Activated B cell treated with CpG ODN at 0.5 μM for 24 hours (primary cell): ENCODE measurements at regions of chr16 and their contacts with region 1.

Region 1: DNA sequence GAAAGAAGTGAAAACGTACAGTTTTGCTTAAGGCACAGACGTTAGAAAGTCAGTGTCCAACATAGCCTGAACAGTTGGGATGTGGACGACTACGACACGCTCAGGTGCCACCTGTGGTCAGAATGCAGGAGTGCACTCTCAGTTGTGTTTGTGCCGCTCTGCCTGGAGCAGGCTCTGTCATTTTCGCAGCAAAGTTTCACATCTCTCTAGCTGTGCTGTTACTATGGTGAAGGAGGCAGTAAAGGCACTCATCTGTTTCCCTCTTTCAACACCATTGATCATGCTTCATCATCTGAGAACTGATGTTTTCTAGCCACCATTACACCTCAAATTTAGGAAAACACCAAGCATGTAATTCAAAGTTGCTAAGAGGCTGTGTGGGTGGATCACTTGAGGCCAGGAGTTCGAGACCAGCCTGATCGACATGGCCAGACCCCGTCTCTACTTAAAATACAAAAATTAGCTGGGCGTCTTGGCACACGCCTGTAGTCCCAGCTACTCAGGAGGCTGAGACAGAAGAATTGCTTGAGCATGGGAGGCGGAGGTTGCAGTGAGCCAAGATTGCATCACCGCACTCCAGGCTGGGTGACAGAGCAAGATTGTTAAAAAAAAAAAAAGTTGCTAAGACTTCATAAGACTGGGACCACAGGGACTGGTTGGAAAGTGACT is 44.9 kb upstream of the DNAJA2 start:
- DNase-seq: peak; percentile 39
- ATAC-seq: peak; percentile 98
- H3K4me3 Mint-ChIP-seq: peak overlapping the region; percentile 13
- H3K27ac Mint-ChIP-seq: peak overlapping the region; percentile 73
- H3K4me1 Mint-ChIP-seq: peaks cover 28% of the 10 kb centered on the region
- H3K27me3 Mint-ChIP-seq: no peaks in the 10 kb centered on the region
- CTCF ChIP-seq: no peak

Region 2: DNA sequence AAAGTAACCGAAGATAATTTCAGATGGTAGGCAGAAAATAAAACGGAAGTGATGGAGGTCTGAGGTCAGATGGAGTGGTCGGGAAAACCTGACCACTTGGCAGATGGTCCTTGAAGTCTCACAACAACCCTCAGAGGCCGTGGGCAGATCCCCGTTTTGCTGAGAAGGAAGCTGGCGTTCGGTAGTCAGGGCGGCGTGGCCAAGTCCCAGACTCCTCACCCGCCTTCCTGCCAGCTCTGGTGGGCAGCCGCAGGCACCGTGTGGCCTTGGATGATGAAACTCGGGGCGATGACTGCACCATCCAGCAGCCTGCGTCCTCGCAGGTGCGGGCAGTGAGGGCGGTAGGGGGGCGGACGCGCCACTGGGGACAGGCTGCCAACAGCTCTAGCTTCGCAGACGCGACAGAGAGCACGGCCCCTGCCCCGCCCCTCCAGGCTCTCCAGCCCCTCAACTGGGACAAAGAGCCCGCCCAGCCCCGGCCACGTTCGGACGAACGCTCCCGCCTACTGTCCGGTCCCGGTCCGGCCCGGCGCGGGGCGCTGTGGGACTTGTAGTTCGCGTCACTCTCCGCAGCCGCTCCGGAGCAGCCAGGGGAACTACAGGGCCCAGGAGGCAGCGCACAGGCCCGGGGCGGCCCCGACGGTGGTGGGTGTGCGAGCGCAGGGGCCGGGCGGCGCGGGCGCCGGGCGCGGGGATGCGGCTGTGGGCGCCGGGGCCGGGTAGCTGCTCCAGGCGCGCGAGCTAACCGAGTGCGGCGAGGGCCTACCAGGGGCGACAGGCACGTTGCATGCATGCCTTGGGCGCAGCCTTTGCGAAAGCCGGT is 134.5 kb before region 1 on chr16 and contains the start of gene GPT2:
- CTCF ChIA-PET with region 1: no interaction called
- POLR2A ChIA-PET with region 1: no interaction called
- intact Hi-C with region 1: loop called (anchors 1 kb)
- DNase-seq: peak; percentile 85
- ATAC-seq: peak; percentile 95
- H3K4me3 Mint-ChIP-seq: peak within 1 kb of the TSS; percentile 89
- H3K27ac Mint-ChIP-seq: peak within 1 kb of the TSS; percentile 85
- H3K4me1 Mint-ChIP-seq: peaks cover 11% of the 10 kb centered on the region
- H3K27me3 Mint-ChIP-seq: peaks cover 2% of the 10 kb centered on the region
- CTCF ChIP-seq: no peak
- total RNA-seq, gene GPT2: 11.7 and 17.4 TPM in 2 replicates

Region 3: DNA sequence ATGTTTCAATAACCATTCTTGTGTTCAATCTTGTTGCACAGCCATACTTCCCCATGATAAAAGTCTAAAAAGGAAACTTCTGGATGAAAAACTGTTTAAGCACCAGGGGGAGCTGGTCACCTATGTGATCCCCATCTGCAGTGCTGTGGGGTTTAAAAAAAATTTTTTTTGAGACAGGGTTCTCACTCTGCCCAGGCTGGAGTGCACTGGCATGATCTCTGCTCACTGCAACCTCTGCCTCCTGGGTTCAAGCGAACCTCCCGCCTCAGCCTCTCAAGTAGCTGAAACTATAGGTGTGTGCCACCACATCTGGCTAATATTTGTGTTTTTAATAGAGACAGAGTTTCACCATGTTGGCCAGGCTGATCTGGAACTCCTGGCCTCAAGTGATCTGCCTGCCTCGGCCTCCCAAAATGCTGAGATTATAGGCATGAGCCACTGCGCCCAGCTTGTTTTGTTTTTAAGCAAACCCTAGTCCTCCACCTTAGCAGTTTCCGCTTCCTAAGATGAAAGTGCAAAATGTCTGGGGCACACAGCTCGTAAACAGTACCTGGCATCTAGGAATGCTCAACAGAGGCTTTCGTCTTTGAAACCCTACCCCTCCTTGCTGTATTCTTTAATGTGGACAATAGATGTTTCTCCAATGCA is 70.3 kb before region 1 on chr16:
- CTCF ChIA-PET with region 1: interaction called, 4 read pairs
- POLR2A ChIA-PET with region 1: no interaction called
- intact Hi-C with region 1: loop called (anchors 1 kb)
- DNase-seq: no peak
- ATAC-seq: peak; percentile 74
- H3K4me3 Mint-ChIP-seq: no peak overlapping the region
- H3K27ac Mint-ChIP-seq: no peak overlapping the region
- H3K4me1 Mint-ChIP-seq: peaks cover 7% of the 10 kb centered on the region
- H3K27me3 Mint-ChIP-seq: no peaks in the 10 kb centered on the region
- CTCF ChIP-seq: no peak

Region 4: GRCh38 chr16:46973207-46973995 is 45.0 kb before region 1 on chr16 and contains the start of gene DNAJA2:
- CTCF ChIA-PET with region 1: interaction called, 8 read pairs
- POLR2A ChIA-PET with region 1: interaction called, 3 read pairs
- intact Hi-C with region 1: loop called (anchors 1 kb)
- DNase-seq: peak; percentile 94
- ATAC-seq: peak; percentile 93
- H3K4me3 Mint-ChIP-seq: peak within 1 kb of the TSS; percentile 95
- H3K27ac Mint-ChIP-seq: peak within 1 kb of the TSS; percentile 98
- H3K4me1 Mint-ChIP-seq: peaks cover 44% of the 10 kb centered on the region
- H3K27me3 Mint-ChIP-seq: no peaks in the 10 kb centered on the region
- CTCF ChIP-seq: no peak
- total RNA-seq, gene DNAJA2: 54.4 and 57.1 TPM in 2 replicates

Region 5: DNA sequence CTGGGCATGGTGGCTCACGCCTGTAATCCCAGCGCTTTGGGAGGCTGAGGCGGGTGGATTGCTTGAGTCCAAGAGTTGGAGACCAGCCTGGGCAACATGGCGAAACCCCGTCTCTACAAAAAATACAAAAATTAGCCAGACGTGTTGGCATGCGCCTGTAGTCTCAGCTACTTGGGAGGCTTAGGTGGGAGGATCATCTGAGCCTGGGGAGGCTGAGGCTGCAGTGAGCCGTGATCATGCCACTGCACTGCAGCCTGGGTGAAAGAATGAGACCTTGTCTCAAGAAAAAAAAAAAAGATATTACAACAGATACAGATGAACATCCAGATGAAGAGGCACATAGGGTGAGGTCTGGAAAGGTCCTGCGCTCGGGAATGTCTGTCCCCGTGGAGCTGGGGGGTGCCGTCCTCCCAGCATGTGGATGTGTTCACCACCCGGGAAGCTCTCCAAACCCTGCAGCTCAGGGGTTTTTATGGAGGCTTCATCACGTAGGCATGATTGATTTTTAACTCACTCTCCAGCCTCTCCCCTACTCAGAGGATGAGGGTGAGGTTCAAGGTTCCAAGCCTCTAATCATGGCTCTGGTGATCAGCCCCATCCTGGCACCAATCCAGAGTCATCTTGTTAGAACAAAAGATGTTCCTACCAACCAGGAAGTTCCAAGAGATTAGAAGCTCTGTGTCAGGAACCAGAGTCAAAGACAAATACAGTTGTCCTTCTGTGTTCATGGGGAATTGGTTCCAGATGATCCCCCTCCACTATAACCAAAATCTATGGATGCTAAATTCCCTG is 40.1 kb after region 1 on chr16:
- CTCF ChIA-PET with region 1: no interaction called
- POLR2A ChIA-PET with region 1: no interaction called
- intact Hi-C with region 1: no loop called
- DNase-seq: no peak
- ATAC-seq: no peak
- H3K4me3 Mint-ChIP-seq: no peak overlapping the region
- H3K27ac Mint-ChIP-seq: no peak overlapping the region
- H3K4me1 Mint-ChIP-seq: no peaks in the 10 kb centered on the region
- H3K27me3 Mint-ChIP-seq: no peaks in the 10 kb centered on the region
- CTCF ChIP-seq: no peak

Region 6: GRCh38 chr16:47492428-47493377 is 474.3 kb after region 1 on chr16:
- CTCF ChIA-PET with region 1: no interaction called
- POLR2A ChIA-PET with region 1: no interaction called
- intact Hi-C with region 1: loop called (anchors 1 kb)
- DNase-seq: peak; percentile 53
- ATAC-seq: peak; percentile 91
- H3K4me3 Mint-ChIP-seq: peak overlapping the region; percentile 89
- H3K27ac Mint-ChIP-seq: peak overlapping the region; percentile 98
- H3K4me1 Mint-ChIP-seq: peaks cover 52% of the 10 kb centered on the region
- H3K27me3 Mint-ChIP-seq: no peaks in the 10 kb centered on the region
- CTCF ChIP-seq: no peak

Region 7: GRCh38 chr16:48244080-48244862 is 1225.9 kb after region 1 on chr16 and contains the start of gene LONP2:
- CTCF ChIA-PET with region 1: no interaction called
- POLR2A ChIA-PET with region 1: no interaction called
- intact Hi-C with region 1: loop called (anchors 5 kb)
- DNase-seq: peak; percentile 86
- ATAC-seq: peak; percentile 97
- H3K4me3 Mint-ChIP-seq: peak within 1 kb of the TSS; percentile 91
- H3K27ac Mint-ChIP-seq: peak within 1 kb of the TSS; percentile 90
- H3K4me1 Mint-ChIP-seq: peaks cover 34% of the 10 kb centered on the region
- H3K27me3 Mint-ChIP-seq: no peaks in the 10 kb centered on the region
- CTCF ChIP-seq: no peak
- total RNA-seq, gene LONP2: 63.5 and 72.7 TPM in 2 replicates